BJ (cell line): ENCODE measurements at regions of chr13 and their contacts with region 1.

Region 1: GRCh38 chr13:106385654-106386053 is 149.8 kb downstream of the EFNB2 start:
- DNase-seq: no peak
- H3K4me3 ChIP-seq: no peak overlapping the region
- H3K27me3 ChIP-seq: 0 out of 2 replicates have a peak, but pooled peaks cover 1% of the 10 kb centered on the region
- CTCF ChIP-seq: no peak

Region 2: GRCh38 chr13:106337096-106337850 is 48.4 kb before region 1 on chr13:
- CTCF ChIA-PET with region 1: no interaction called
- POLR2A ChIA-PET with region 1: no interaction called
- DNase-seq: no peak
- H3K4me3 ChIP-seq: no peak overlapping the region
- H3K27me3 ChIP-seq: no peaks in the 10 kb centered on the region
- CTCF ChIP-seq: no peak

Region 3: DNA sequence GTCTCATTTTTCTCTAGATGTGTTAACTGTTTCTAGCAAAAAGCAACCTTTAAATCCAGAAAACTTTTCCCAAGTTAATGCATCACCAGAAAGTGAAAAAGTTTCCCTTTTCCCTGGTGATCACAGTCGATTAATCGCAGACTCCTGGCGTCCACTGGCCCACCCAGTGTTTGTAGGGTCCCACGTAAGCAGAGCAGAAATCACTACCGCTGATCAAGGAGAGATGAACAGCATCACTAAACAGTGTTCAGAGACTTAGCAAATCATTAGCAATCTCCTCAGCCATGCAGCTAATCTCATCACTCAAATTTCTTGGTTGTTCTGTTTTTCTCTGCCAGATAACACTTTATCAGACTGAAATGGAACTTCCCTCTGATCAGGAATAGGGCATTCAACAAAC is 34.4 kb before region 1 on chr13:
- CTCF ChIA-PET with region 1: no interaction called
- POLR2A ChIA-PET with region 1: interaction called, 11 read pairs
- DNase-seq: no peak
- H3K4me3 ChIP-seq: no peak overlapping the region
- H3K27me3 ChIP-seq: 0 out of 2 replicates have a peak, but pooled peaks cover 1% of the 10 kb centered on the region
- CTCF ChIP-seq: no peak